Common myeloid progenitor, CD34-positive (primary cell): ENCODE measurements at regions of chr14 and their contacts with region 1.

Region 1: DNA sequence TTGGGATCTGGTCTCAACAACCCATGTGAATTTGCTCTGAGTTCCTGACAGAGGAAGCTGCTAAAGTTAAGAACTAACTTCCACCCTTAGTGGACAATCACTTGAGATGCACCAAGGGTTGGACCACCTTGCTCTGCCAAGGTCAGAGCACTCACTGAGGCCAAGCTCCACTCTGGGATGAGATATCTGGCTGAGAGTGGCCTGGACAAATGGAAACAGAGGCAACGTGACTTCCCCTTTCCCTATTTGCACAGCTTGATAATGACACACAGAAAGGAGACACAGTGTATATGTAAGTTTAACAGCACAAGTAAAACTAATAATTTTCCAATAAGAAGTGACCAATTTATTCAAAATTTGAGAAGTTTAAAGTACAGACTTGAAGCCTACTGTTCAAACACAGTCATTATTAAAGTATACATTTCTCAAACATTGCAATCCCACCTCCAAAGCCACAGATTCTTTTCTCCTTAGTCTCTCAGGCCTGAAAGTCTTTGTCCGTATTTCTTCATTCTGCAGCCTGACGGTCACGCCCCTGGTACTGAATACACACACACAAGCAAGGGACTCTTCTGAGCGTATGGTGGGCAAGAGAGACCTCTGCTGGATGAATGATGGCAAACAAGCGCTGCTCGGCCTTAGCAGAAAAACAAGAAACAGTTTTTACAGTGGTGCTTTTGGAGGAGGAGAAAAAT is 28.6 kb downstream of the TMEM30B start:
- DNase-seq: peak; percentile 84 to 94 (median 91)
- H3K4me3 ChIP-seq: peak overlapping the region in 1 of 7 experiments; percentile 27
- H3K27ac ChIP-seq: no peak overlapping the region
- H3K4me1 ChIP-seq: peaks cover 3 to 15% (median 10%) of the 10 kb centered on the region in 4 experiments
- H3K27me3 ChIP-seq: peaks cover 0 to 3% (median 0%) of the 10 kb centered on the region in 5 experiments

Region 2: GRCh38 chr14:60622917-60623257 is 629.6 kb before region 1 on chr14:
- CTCF ChIA-PET with region 1: interaction called, 33 read pairs
- POLR2A ChIA-PET with region 1: no interaction called
- DNase-seq: no peak
- H3K4me3 ChIP-seq: no peak overlapping the region
- H3K27ac ChIP-seq: no peak overlapping the region
- H3K4me1 ChIP-seq: no peaks in the 10 kb centered on the region
- H3K27me3 ChIP-seq: peaks cover 2 to 22% (median 4%) of the 10 kb centered on the region in 5 experiments

Region 3: GRCh38 chr14:60637479-60638315 is 614.8 kb before region 1 on chr14:
- CTCF ChIA-PET with region 1: interaction called, 10 read pairs
- POLR2A ChIA-PET with region 1: no interaction called
- DNase-seq: peak in 1 of 3 donors; percentile 20
- H3K4me3 ChIP-seq: peak overlapping the region in 4 of 7 experiments; percentile 4 to 20 (median 14)
- H3K27ac ChIP-seq: no peak overlapping the region
- H3K4me1 ChIP-seq: peaks cover 0 to 20% (median 17%) of the 10 kb centered on the region in 4 experiments
- H3K27me3 ChIP-seq: peaks cover 34 to 95% (median 58%) of the 10 kb centered on the region in 5 experiments

Region 4: GRCh38 chr14:61203081-61203753 is 49.3 kb before region 1 on chr14:
- CTCF ChIA-PET with region 1: no interaction called
- POLR2A ChIA-PET with region 1: no interaction called
- DNase-seq: no peak
- H3K4me3 ChIP-seq: no peak overlapping the region
- H3K27ac ChIP-seq: no peak overlapping the region
- H3K4me1 ChIP-seq: no peaks in the 10 kb centered on the region
- H3K27me3 ChIP-seq: peaks cover 4 to 20% (median 6%) of the 10 kb centered on the region in 5 experiments